IMR-90 (cell line): ENCODE measurements at regions of chr6 and their contacts with region 1.

Region 1: DNA sequence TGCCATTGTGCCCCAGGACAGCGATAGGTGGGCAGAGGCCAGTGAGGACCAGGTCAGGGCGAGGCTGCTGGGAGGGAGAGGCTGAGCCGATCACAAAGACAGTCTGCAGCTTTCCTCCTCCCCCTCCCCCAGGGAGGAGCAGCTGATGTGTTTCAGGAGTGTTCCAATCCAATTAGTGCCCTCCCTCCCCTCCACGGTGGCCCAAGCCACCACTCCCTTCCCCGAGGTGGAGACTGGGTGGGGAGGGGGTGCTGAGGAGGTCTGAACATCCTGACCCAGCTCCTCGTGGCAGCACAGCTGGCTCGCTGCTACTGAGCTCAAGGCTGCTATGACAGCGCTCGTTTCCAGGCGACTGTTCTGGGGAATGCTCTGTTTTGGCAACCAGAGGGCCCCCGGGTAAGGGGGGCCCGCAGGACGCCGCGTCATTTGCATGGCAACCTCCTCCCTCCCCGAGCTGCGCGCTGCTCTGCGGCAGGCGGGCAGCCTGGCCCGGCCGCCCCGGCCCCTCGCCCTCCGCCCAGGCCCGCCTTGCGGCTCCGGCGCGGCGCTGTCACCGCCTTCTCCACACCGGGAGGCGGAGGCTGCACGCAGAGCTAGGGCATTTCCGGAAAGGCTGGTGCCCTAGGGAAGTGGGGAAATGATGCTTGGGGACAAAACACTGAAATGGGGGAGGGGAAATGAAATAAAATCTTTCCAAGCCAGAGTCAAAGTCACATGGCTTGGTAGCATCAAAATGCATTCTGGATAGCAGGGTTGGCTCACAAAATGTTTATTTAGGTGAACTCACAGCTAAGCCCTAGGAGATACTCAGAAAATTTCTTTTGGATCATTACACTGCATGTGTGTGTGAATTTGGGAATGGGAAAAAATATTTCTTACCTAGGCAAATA is 67.4 kb upstream of the PIM1 start:
- DNase-seq: peak; percentile 88
- ATAC-seq: peak; percentile 94
- H3K4me3 ChIP-seq: peak overlapping the region; percentile 39
- H3K27ac ChIP-seq: peak overlapping the region; percentile 37
- H3K4me1 ChIP-seq: peaks cover 12% of the 10 kb centered on the region
- H3K27me3 ChIP-seq: no peaks in the 10 kb centered on the region
- CTCF ChIP-seq: 0 out of 2 replicates have a peak, but pooled peaks have one; percentile 18
- POLR2A ChIP-seq: peak; percentile 62; the same call in 1 of the 2 replicates
- RAD21 ChIP-seq: 0 out of 2 replicates have a peak, but pooled peaks have one; percentile 5

Region 2: GRCh38 chr6:37059344-37060206 is 42.9 kb before region 1 on chr6:
- CTCF ChIA-PET with region 1: no interaction called
- POLR2A ChIA-PET with region 1: no interaction called
- dilution Hi-C with region 1: no loop called
- in situ Hi-C with region 1: no loop called
- intact Hi-C with region 1: loop called (anchors 2 kb)
- DNase-seq: peak; percentile 97
- ATAC-seq: peak; percentile 88
- H3K4me3 ChIP-seq: peak overlapping the region; percentile 1; the same call in 1 of the 2 replicates
- H3K27ac ChIP-seq: peak overlapping the region; percentile 81
- H3K4me1 ChIP-seq: peaks cover 12% of the 10 kb centered on the region
- H3K27me3 ChIP-seq: no peaks in the 10 kb centered on the region
- CTCF ChIP-seq: peak; percentile 86
- POLR2A ChIP-seq: peak; percentile 63; the same call in 1 of the 2 replicates
- RAD21 ChIP-seq: peak; percentile 87

Region 3: DNA sequence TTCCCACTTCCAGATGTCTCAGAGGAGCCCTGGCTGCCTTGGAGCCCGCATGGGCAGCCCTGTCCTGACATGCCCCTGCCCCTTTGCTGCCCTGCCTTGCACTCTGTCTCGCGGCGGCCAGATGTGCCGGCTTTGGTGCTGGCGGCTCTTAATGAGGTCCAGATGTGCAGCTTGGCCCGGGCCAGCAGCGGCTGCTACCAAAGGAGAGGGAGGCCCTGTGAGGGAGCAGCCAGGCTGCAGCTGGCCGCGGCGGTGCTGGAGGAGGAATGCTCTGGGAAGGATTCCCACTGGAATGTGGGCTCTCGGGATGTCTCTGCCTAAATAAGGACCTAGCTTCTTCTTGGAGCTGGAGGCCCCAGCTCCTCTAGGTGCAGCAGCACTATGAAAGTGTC is 24.6 kb before region 1 on chr6:
- CTCF ChIA-PET with region 1: no interaction called
- POLR2A ChIA-PET with region 1: no interaction called
- dilution Hi-C with region 1: no loop called
- in situ Hi-C with region 1: no loop called
- intact Hi-C with region 1: loop called (anchors 1 kb)
- DNase-seq: peak; percentile 95
- ATAC-seq: peak; percentile 98
- H3K4me3 ChIP-seq: no peak overlapping the region
- H3K27ac ChIP-seq: peak overlapping the region; percentile 88
- H3K4me1 ChIP-seq: peaks cover 9% of the 10 kb centered on the region
- H3K27me3 ChIP-seq: no peaks in the 10 kb centered on the region
- CTCF ChIP-seq: no peak
- POLR2A ChIP-seq: no peak
- RAD21 ChIP-seq: peak; percentile 27

Region 4: GRCh38 chr6:37205175-37205996 is 102.9 kb after region 1 on chr6:
- CTCF ChIA-PET with region 1: no interaction called
- POLR2A ChIA-PET with region 1: no interaction called
- dilution Hi-C with region 1: no loop called
- in situ Hi-C with region 1: no loop called
- intact Hi-C with region 1: no loop called
- DNase-seq: no peak
- ATAC-seq: no peak
- H3K4me3 ChIP-seq: no peak overlapping the region
- H3K27ac ChIP-seq: no peak overlapping the region
- H3K4me1 ChIP-seq: peaks cover 2% of the 10 kb centered on the region; the same call in 1 of the 2 replicates
- H3K27me3 ChIP-seq: peaks cover 6% of the 10 kb centered on the region
- CTCF ChIP-seq: no peak
- POLR2A ChIP-seq: no peak
- RAD21 ChIP-seq: no peak

Region 5: DNA sequence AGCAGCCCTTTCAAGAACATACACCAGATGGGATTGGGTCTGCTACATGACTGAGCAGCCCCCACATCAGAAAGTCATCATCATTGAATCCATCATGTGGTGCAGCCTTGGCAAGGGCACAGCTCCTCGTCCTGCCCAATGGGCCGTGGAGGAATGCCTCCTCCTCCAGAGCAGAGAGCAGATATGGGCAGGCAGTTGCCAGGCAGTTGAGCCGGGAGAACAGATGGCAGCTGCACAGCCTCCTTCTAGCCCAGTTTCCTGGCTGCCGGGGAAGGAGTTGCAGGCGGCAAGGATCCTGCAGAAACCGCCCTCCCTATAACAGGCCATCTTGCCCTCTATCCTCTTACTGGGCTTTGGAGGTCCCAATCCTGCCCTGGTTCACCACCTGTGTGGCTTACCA is 705.1 kb after region 1 on chr6:
- CTCF ChIA-PET with region 1: no interaction called
- POLR2A ChIA-PET with region 1: no interaction called
- dilution Hi-C with region 1: no loop called
- in situ Hi-C with region 1: no loop called
- intact Hi-C with region 1: no loop called
- DNase-seq: no peak
- ATAC-seq: peak; percentile 53
- H3K4me3 ChIP-seq: no peak overlapping the region
- H3K27ac ChIP-seq: no peak overlapping the region
- H3K4me1 ChIP-seq: peaks cover 3% of the 10 kb centered on the region
- H3K27me3 ChIP-seq: peaks cover 19% of the 10 kb centered on the region
- CTCF ChIP-seq: no peak
- POLR2A ChIP-seq: no peak
- RAD21 ChIP-seq: no peak